ENCODE measurements at regions of chr16 and their contacts with region 1.

Region 1: GRCh38 chr16:31073968-31074813 is at the starts of genes ZNF646 and ZNF668:
- DNase-seq: peak; percentile 100
- ATAC-seq: peak; percentile 80
- H3K4me3 Mint-ChIP-seq: peak within 1 kb of the TSS; percentile 96
- H3K27ac Mint-ChIP-seq: peak within 1 kb of the TSS; percentile 98
- H3K4me1 Mint-ChIP-seq: peaks cover 43% of the 10 kb centered on the region
- H3K27me3 Mint-ChIP-seq: no peaks in the 10 kb centered on the region
- CTCF ChIP-seq: no peak
- total RNA-seq, gene ZNF646: 22.0 to 24.4 TPM
- total RNA-seq, gene ZNF668: 16.2 to 18.8 TPM

Region 2: GRCh38 chr16:30820952-30821760 is 253.0 kb before region 1 on chr16:
- CTCF ChIA-PET with region 1: no interaction called
- POLR2A ChIA-PET with region 1: no interaction called
- intact Hi-C with region 1: no loop called
- DNase-seq: no peak
- ATAC-seq: no peak
- H3K4me3 Mint-ChIP-seq: no peak overlapping the region
- H3K27ac Mint-ChIP-seq: no peak overlapping the region
- H3K4me1 Mint-ChIP-seq: no peaks in the 10 kb centered on the region
- H3K27me3 Mint-ChIP-seq: no peaks in the 10 kb centered on the region
- CTCF ChIP-seq: no peak

Region 3: GRCh38 chr16:31032736-31033708 is 41.2 kb before region 1 on chr16 and contains the start of gene STX4:
- CTCF ChIA-PET with region 1: no interaction called
- POLR2A ChIA-PET with region 1: interaction called, 17 read pairs
- intact Hi-C with region 1: loop called (anchors 5 kb)
- DNase-seq: peak; percentile 99
- ATAC-seq: peak; percentile 84
- H3K4me3 Mint-ChIP-seq: peak within 1 kb of the TSS; percentile 85
- H3K27ac Mint-ChIP-seq: peak within 1 kb of the TSS; percentile 89
- H3K4me1 Mint-ChIP-seq: peaks cover 22% of the 10 kb centered on the region
- H3K27me3 Mint-ChIP-seq: no peaks in the 10 kb centered on the region
- CTCF ChIP-seq: no peak
- total RNA-seq, gene STX4: 25.2 to 27.7 TPM

Region 4: DNA sequence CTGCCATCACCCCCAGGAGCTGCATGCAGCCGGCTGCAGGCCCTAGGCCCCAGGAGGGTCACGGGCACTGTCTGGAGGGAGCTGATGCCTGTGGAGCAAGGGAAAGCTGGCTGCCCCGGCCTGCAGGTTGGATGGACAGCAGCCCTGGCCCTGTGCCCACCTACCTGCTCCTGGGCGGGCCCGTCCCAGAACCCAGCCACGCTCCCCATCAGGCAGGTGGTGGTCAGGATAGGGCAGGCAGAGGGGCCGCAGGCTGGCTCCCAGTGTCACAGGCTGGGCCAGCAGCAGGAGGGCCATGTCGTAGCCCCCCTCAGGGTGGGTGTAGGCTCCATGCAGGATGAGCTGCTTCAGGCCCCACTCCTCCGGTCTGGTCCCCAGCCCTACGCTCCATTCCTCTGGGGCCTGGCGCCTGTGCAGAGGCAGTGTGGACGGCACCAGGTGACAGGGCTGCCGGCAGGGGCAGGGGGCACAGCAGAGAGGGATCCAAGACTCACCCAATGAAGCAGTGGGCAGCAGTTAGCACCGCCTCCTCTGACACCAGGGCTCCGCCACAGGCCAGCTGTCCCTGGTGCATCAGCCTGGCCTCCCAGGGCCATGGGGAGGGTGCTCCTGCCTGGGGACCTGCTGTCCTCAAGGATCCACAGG is 10.5 kb after region 1 on chr16:
- CTCF ChIA-PET with region 1: no interaction called
- POLR2A ChIA-PET with region 1: interaction called, 22 read pairs
- intact Hi-C with region 1: no loop called
- DNase-seq: no peak
- ATAC-seq: no peak
- H3K4me3 Mint-ChIP-seq: no peak overlapping the region
- H3K27ac Mint-ChIP-seq: no peak overlapping the region
- H3K4me1 Mint-ChIP-seq: peaks cover 16% of the 10 kb centered on the region
- H3K27me3 Mint-ChIP-seq: no peaks in the 10 kb centered on the region
- CTCF ChIP-seq: no peak

Region 5: DNA sequence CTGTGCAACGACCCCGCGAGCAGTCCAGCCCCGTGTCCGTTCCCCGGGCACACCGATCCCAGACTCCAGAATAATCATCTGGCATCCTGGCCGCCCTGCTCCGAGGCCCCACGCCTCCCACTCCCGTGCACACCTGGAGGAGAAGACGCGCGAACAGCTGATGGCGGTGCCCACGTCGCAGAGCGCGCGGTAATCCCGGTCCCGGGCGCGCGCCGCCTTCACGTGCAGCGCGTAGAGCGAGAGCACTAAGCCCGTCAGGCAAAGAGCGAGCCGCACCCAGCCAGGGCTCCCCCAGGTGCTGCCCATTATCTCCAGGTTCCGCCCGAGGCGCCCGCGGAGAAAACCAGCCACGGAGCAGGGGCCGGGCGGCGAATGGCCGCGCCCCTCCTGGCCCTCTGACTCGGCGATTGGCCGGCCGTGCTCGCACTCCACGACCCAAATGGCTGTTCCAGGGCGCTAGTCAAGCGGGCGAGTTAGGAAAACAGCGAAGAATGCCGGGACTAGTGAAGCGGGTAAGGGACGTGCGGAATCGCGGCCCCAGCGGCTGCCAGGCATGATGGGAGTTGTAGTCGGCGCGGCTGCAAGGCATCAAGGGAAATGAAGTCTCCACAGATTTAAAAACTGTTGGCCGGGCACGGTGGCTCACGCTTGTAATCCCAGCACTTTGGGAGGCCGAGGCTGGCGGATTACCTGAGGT is 20.4 kb after region 1 on chr16 and contains the start of gene VKORC1:
- CTCF ChIA-PET with region 1: interaction called, 15 read pairs
- POLR2A ChIA-PET with region 1: interaction called, 7 read pairs
- intact Hi-C with region 1: no loop called
- DNase-seq: peak; percentile 96
- ATAC-seq: peak; percentile 88
- H3K4me3 Mint-ChIP-seq: peak within 1 kb of the TSS; percentile 94
- H3K27ac Mint-ChIP-seq: peak within 1 kb of the TSS; percentile 90
- H3K4me1 Mint-ChIP-seq: peaks cover 22% of the 10 kb centered on the region
- H3K27me3 Mint-ChIP-seq: no peaks in the 10 kb centered on the region
- CTCF ChIP-seq: no peak
- total RNA-seq, gene VKORC1: 68.5 to 71.5 TPM

Region 6: GRCh38 chr16:31117391-31118197 is 43.4 kb after region 1 on chr16 and contains the start of gene KAT8:
- CTCF ChIA-PET with region 1: no interaction called
- POLR2A ChIA-PET with region 1: interaction called, 11 read pairs
- intact Hi-C with region 1: no loop called
- DNase-seq: peak; percentile 99
- ATAC-seq: peak; percentile 95
- H3K4me3 Mint-ChIP-seq: peak within 1 kb of the TSS; percentile 87
- H3K27ac Mint-ChIP-seq: peak within 1 kb of the TSS; percentile 86
- H3K4me1 Mint-ChIP-seq: peaks cover 23% of the 10 kb centered on the region
- H3K27me3 Mint-ChIP-seq: no peaks in the 10 kb centered on the region
- CTCF ChIP-seq: no peak
- total RNA-seq, gene KAT8: 55.6 to 58.7 TPM